Naive thymus-derived CD4-positive, alpha-beta T cell (primary cell): ENCODE measurements at regions of chr21 and their contacts with region 1.

Region 1: GRCh38 chr21:42337830-42338728 is 12.7 kb downstream of the TFF2 start:
- DNase-seq: peak; percentile 68 to 85 (median 78)
- ATAC-seq: peak; percentile 99
- H3K4me3 ChIP-seq: no peak overlapping the region
- H3K4me3 Mint-ChIP-seq: peak overlapping the region; percentile 28 to 76 (median 60)
- H3K27ac ChIP-seq: no peak overlapping the region
- H3K27ac Mint-ChIP-seq: peak overlapping the region in 7 of 9 donors; percentile 19 to 75 (median 53)
- H3K4me1 ChIP-seq: peaks cover 4 to 7% of the 10 kb centered on the region in 2 donors
- H3K4me1 Mint-ChIP-seq: peaks cover 5 to 12% (median 8%) of the 10 kb centered on the region in 7 donors
- H3K27me3 ChIP-seq: no peaks in the 10 kb centered on the region
- H3K27me3 Mint-ChIP-seq: peaks cover 0 to 32% (median 0%) of the 10 kb centered on the region in 5 donors

Region 2: GRCh38 chr21:42424914-42425541 is 86.9 kb after region 1 on chr21:
- CTCF ChIA-PET with region 1: interaction called, 12 read pairs
- POLR2A ChIA-PET with region 1: interaction called, 3 read pairs
- intact Hi-C with region 1: loop called (anchors 1 to 10 kb)
- DNase-seq: peak; percentile 44 to 90 (median 84)
- ATAC-seq: peak; percentile 94
- H3K4me3 ChIP-seq: peak overlapping the region; percentile 22
- H3K4me3 Mint-ChIP-seq: peak overlapping the region; percentile 54 to 86 (median 80)
- H3K27ac ChIP-seq: peak overlapping the region; percentile 85
- H3K27ac Mint-ChIP-seq: peak overlapping the region; percentile 83 to 94 (median 89)
- H3K4me1 ChIP-seq: peaks cover 68 to 71% of the 10 kb centered on the region in 2 donors
- H3K4me1 Mint-ChIP-seq: peaks cover 59 to 88% (median 81%) of the 10 kb centered on the region in 7 donors
- H3K27me3 ChIP-seq: no peaks in the 10 kb centered on the region
- H3K27me3 Mint-ChIP-seq: peaks cover 0 to 6% (median 0%) of the 10 kb centered on the region in 5 donors

Region 3: DNA sequence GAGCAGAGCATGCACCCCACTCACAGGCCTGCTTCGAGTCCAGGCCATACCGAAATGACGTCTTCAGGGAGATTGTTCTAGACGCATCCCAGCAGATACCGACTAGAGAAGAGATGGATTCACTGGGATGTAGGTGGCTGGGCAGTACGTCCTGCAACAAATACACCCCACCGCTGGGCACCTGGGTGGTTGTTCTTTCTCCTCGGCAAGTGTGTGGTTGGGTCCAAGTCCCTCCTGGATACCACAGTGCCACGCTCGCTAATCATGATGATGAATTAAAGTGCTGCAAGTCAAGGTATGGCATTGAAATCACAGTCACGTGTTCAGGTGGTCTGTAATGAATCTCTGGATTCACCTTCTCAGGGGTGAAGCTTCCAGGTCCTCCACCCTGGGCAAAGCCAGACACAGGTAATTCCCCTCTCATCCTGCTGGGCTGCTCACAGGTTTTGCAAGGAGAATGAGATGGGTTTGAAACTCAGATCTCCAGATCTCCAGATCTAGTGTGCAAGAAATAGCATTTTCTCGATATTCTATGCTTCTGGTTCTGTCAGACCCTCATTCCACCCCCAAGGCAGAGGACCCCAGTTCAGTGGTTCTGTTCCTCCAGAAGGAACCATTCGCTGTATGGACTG is 111.3 kb after region 1 on chr21:
- CTCF ChIA-PET with region 1: interaction called, 19 read pairs
- POLR2A ChIA-PET with region 1: interaction called, 5 read pairs
- intact Hi-C with region 1: loop called (anchors 1 kb)
- DNase-seq: no peak
- ATAC-seq: no peak
- H3K4me3 ChIP-seq: no peak overlapping the region
- H3K4me3 Mint-ChIP-seq: peak overlapping the region in 2 of 10 donors; percentile 52 to 60
- H3K27ac ChIP-seq: peak overlapping the region; percentile 61
- H3K27ac Mint-ChIP-seq: peak overlapping the region; percentile 93 to 99 (median 97)
- H3K4me1 ChIP-seq: peaks cover 4 to 15% of the 10 kb centered on the region in 2 donors
- H3K4me1 Mint-ChIP-seq: peaks cover 13 to 55% (median 40%) of the 10 kb centered on the region in 7 donors
- H3K27me3 ChIP-seq: no peaks in the 10 kb centered on the region
- H3K27me3 Mint-ChIP-seq: peaks cover 0 to 4% (median 0%) of the 10 kb centered on the region in 5 donors

Region 4: DNA sequence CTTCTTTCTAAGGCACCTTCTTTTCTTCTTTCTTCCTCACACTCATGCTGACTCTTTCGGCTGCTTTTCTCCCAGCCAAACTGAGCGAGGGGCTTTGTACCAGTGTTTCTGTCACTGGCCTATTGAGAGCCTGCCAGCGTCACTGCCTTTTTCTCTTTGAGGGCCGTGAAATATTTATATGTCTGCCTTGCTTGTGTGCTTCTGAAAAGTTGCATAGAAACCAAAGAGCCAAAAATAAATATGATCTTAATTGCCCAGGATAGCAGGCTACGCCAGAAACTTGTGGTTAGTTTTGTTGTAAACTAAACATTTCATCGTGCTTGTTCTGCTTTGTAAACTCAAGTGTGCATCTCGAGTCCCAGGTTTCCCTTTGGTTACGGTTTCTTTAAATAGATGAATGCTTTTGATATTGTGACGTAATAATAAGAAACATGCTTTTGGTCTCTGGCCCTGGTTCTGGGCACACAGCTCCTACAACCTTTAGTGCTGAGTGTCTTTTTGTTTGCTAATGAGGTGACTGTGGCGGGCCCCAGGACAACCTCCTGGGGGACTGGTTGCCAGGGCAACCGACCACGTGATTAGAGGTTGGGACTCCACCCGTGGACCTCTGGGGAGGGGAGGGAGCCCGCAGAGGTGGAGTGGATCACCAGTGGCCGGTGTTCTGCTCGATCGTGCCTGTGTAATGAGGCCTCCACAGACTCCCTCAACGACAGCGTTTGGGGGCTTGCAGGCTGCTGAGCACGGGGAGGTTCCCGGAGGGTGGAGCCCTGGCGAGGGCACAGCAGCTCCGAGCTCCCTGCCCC is 186.5 kb after region 1 on chr21:
- CTCF ChIA-PET with region 1: no interaction called
- POLR2A ChIA-PET with region 1: no interaction called
- intact Hi-C with region 1: loop called in 1 of 2 experiments (anchors 5 kb)
- DNase-seq: peak in 3 of 9 donors; percentile 10 to 25 (median 20)
- ATAC-seq: peak; percentile 60
- H3K4me3 ChIP-seq: no peak overlapping the region
- H3K4me3 Mint-ChIP-seq: peak overlapping the region in 7 of 10 donors; percentile 20 to 52 (median 43)
- H3K27ac ChIP-seq: no peak overlapping the region
- H3K27ac Mint-ChIP-seq: peak overlapping the region in 8 of 9 donors; percentile 6 to 88 (median 56)
- H3K4me1 ChIP-seq: peaks cover 16 to 30% of the 10 kb centered on the region in 2 donors
- H3K4me1 Mint-ChIP-seq: peaks cover 39 to 64% (median 54%) of the 10 kb centered on the region in 7 donors
- H3K27me3 ChIP-seq: no peaks in the 10 kb centered on the region
- H3K27me3 Mint-ChIP-seq: no peaks in the 10 kb centered on the region

Region 5: DNA sequence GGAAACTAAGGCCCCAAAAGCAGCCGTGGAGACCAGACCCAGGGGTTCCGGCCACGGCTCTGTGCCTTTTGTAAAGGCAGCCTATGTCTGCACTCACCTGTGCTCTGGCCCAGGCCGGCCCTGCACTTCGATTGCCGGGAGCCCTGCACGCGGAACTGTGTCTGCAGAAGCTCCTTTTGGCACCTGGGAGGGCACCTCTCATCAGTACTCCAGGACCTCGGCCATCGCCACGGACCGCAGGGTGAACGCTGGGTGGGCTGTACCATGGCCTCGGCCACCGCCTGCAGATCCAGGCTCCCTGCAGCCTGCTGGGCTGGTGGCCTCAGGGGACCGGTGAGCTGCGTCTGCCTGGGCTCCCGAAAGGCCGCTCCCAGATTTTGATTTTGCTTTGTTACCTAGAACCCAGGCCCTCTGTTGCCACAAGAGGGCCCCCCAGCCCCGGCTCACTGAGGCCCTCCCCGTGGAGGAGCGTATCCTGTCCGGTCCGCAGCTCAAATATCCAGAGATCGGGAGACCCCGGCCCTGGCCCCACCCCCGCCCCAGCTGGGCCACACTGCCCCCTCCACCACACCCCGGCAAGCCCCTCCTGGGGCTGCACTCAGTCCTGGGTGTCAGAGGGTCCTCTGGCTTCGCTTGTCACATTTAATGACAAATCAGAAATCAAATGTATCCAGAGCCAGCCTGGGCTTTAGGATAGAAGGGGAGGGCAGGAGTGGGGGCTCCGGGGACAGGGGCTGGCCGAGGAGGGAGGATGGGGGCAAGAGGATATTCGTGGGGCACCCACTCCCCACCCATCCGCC is 255.1 kb after region 1 on chr21:
- CTCF ChIA-PET with region 1: no interaction called
- POLR2A ChIA-PET with region 1: no interaction called
- intact Hi-C with region 1: no loop called
- DNase-seq: peak; percentile 52 to 75 (median 68)
- ATAC-seq: peak; percentile 81
- H3K4me3 ChIP-seq: no peak overlapping the region
- H3K4me3 Mint-ChIP-seq: peak overlapping the region in 1 of 10 donors; percentile 25
- H3K27ac ChIP-seq: no peak overlapping the region
- H3K27ac Mint-ChIP-seq: peak overlapping the region in 1 of 9 donors; percentile 15
- H3K4me1 ChIP-seq: peaks cover 0 to 13% of the 10 kb centered on the region in 2 donors
- H3K4me1 Mint-ChIP-seq: peaks cover 0 to 29% (median 22%) of the 10 kb centered on the region in 7 donors
- H3K27me3 ChIP-seq: no peaks in the 10 kb centered on the region
- H3K27me3 Mint-ChIP-seq: no peaks in the 10 kb centered on the region